GM13977 (cell line): ENCODE measurements at regions of chr1 and their contacts with region 1.

Region 1: DNA sequence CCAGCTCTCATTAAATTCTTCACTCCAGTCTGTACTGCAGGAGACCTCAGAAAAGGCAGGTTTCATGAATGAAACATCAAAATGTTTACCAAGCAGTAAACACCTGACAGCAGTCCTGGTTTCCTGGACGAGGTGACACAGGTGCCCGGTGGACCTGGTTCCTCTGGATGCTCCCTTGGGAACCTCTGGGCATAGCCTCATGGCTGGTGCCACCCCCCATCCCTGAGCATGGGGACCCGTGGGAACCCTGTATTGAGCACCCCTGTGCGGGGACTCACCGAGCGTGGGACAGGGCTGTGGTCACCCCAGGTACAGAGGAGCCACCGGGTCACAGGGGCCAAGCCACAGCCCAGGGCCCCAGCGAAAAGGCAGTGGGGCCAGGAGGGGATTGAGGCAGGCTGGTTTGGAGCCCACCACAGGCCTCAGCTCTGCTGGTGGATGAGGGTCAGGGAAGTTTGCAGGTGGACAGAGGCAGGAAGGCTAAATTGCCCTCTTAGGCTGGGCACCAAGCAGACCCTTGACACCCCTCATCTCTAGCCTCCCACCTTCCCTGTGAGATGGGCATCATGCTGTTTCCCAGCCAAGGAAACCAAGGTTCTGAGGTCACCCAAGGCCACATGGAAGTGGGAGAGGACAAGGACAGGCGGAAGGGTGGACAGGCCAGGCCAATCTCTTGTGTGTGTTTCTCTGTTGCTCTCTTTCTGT is 158.4 kb downstream of the PTPRU start:
- DNase-seq: no peak
- CTCF ChIP-seq: no peak

Region 2: DNA sequence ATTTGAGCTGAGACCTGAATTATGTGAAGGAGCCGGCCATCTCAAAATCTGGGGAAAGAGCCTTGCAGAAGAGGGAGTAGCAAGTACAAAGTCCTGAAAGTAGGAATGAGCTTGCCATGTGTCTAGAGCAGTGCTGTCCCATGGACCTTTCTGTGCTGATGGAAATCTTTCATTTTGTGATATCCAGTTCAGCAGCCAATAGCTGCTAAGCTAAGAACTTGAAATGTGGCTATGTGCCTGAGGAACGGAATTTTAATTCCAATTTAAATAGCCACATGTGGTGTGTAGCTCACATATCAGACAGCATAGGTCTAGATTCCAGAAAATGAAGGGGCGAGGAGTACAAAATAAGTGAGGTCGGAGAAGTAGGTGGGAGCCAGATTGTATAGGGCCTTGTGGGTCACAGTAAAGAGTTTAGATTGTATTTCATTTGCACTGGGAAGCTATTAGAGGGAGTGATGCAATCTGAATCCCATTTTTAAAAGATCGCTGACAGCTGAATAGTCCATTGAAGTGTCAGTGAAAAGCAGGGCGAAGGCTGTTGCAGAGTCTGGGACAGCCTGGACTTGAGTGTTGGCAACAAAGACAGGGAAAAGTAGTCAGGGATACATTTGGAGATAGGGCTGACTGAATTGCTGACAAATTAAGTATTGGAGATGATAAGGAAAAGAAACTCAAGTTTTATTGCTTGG is 351.3 kb before region 1 on chr1:
- in situ Hi-C with region 1: no loop called
- DNase-seq: no peak
- CTCF ChIP-seq: no peak

Region 3: DNA sequence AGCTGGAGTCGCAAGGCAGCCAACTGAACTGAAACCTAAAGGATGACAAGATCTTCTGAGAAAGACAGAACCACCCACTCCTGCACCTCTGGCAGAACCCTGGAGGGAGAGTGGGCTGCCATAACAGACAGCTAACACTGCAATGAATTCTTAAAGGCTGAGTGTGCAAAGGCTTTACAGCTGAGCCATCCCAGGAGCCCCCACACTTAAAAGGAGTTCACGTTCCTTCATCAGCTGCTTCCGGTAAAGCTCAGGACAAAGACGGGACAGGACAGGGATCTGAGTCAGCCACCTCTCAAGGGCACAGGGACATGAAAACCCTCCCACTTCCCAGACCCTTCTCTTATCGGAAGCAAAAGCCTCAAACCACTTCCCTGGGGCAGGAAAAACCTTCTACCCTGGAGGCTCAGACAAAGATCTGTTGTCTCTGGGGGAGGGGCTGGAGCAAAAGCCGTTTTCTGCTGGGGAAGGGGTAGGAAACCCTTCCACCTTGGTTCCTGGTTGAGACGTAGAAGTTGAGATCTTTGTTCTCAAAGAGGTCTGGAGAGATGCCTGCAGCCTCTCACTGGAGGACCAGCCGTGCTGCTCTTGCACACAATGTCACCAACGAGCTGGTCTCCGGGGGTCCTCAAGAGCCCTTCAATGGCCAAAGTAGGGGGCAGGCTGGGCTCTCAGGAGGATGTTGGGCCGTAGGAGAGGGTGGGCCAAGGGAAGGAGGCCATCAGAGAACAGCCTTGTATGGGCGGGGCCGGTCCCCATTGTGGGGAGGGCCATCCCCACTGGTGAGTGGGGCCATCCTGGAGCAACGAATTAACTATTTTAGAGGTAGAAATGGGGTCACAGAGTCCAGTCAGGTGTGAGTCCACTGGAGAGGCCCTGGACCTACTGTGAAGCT is 294.0 kb after region 1 on chr1:
- in situ Hi-C with region 1: no loop called
- DNase-seq: peak; percentile 58
- CTCF ChIP-seq: no peak

Region 4: DNA sequence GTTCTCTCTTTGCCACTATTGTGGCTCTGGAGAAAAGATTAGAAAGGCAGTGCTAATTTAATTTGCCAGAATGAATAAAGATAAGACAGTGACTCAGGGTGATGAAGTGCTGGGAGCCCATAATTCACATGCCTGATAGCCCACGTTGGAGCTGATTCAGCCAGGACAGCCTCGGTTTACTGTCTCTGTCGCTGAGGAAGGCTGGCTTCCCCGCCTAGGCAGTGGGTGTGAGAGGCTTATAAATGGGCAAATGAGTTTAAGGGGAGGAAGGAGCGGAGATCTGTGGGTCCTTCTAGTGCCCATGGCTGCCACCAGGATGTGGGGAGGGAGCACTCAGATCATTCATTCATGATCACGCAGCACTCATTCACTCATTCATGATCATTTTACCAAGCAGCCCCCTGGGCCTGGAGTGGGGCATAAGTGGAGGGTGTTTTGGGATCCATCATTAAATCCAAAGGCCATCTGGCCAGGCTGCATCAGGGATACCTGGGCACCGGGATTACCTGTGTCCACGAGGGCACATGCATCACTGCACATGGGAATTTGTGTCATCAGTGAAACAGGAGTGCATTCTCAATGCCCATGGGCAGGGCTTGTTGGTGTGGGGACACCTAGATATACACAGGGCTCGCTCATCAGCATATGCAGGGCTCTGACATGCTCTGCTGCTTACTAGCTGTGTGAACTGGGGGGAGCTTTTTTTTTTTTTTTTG is 1013.4 kb after region 1 on chr1:
- in situ Hi-C with region 1: loop called (anchors 5 kb)
- DNase-seq: no peak
- CTCF ChIP-seq: no peak